OCI-LY7 (cell line): ENCODE measurements at regions of chr1 and their contacts with region 1.

Region 1: GRCh38 chr1:184051485-184052193 is at the start of gene TSEN15:
- DNase-seq: peak; percentile 94
- H3K4me3 ChIP-seq: peak within 1 kb of the TSS; percentile 73
- H3K27ac ChIP-seq: peak within 1 kb of the TSS; percentile 80
- H3K4me1 ChIP-seq: peaks cover 15% of the 10 kb centered on the region
- CTCF ChIP-seq: no peak; the same call in 1 of the 2 replicates
- total RNA-seq, gene TSEN15: 39.8 and 42.5 TPM in 2 replicates

Region 2: DNA sequence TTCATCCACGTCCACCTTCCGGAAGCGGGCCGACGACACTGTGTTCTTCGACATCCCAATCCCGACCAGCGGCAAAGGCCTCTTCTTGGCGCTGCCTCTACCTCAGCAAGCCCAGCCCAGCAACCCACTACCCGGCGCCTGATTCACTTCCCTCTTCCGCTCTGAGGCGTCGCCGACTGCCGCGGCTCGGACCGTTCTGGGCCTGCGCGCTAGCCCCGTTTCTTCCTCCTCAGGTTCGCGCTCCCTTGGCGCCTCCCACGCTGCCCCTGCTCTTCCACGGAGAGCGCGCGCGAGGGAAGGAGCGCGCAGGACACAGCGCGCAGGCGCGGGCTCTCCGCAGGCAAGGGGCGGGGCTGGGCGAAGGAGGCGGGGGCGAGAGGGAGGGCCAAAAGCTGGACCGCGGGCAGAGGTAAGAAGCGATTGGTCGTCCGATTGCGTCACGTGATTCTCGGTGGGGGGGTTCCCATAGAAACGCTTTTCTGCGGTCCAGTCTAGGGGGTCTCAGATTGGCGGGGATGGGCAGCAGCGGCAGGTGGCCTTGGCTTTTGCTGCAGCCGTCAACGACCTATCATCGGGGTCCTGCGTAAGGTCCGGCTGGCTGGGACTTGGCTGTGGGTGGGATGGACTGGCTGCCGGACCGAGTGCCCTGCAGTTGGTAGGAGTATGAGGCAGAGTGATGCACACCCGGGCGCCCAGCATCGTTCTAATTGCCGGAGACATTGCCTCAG is 415.9 kb before region 1 on chr1 and contains the start of gene ARPC5:
- CTCF ChIA-PET with region 1: no interaction called
- POLR2A ChIA-PET with region 1: interaction called, 15 read pairs
- intact Hi-C with region 1: loop called (anchors 5 kb)
- DNase-seq: peak; percentile 95
- H3K4me3 ChIP-seq: peak within 1 kb of the TSS; percentile 94
- H3K27ac ChIP-seq: peak within 1 kb of the TSS; percentile 75
- H3K4me1 ChIP-seq: peaks cover 32% of the 10 kb centered on the region
- CTCF ChIP-seq: no peak
- total RNA-seq, gene ARPC5: 116 and 148 TPM in 2 replicates

Region 3: DNA sequence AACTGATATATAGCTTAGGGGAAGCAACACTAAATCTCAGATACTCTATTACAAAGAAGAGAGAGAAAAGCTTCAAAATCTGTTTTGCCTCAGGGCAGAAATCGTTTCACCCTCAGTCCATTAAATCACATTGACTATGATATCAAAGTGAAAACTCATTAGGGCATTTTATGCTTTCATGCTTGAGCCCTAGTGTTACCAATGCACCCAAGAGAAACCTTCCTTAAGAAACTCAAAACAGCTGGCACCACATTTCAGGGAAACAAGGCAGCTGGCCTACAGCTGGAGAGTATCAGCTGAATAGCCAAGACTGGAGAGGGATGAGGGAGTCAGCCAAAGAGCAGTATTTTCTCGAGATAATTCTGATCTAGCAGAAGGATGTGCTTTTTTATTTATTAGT is 29.0 kb before region 1 on chr1:
- CTCF ChIA-PET with region 1: no interaction called
- POLR2A ChIA-PET with region 1: interaction called, 10 read pairs
- intact Hi-C with region 1: no loop called
- DNase-seq: no peak
- H3K4me3 ChIP-seq: no peak overlapping the region
- H3K27ac ChIP-seq: no peak overlapping the region
- H3K4me1 ChIP-seq: no peaks in the 10 kb centered on the region
- CTCF ChIP-seq: no peak

Region 4: DNA sequence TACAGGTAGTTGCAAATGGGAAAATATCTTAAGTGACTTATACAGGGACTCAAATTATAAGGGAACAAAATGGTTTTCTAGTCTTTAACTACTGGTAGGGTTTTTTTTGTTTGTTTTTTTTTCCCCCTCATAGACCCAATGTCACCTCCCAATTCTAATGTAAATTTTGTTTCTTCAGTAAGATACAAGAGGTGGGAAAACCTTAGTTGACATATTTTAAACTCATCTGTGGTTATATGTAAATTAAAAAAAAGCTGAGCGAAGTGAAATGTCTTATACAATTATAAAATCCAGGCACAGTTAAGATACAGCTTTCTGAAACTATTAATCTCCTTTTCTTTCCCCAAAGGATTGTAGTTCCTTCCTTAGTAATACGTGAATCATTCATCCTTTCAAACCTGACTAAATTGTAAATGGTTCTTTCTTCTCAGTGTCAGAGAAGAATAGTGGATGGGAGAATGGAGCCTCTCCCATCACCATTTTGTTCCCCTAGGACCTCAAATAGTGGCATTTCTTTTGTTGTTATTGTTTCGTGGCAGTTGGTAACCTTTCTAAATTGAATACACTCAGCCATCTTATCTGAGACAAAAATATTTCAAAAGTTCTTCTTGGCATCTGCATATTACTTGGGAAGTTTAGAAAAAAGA is 11.1 kb after region 1 on chr1:
- CTCF ChIA-PET with region 1: no interaction called
- POLR2A ChIA-PET with region 1: interaction called, 21 read pairs
- intact Hi-C with region 1: no loop called
- DNase-seq: no peak
- H3K4me3 ChIP-seq: no peak overlapping the region
- H3K27ac ChIP-seq: no peak overlapping the region
- H3K4me1 ChIP-seq: no peaks in the 10 kb centered on the region
- CTCF ChIP-seq: no peak

Region 5: DNA sequence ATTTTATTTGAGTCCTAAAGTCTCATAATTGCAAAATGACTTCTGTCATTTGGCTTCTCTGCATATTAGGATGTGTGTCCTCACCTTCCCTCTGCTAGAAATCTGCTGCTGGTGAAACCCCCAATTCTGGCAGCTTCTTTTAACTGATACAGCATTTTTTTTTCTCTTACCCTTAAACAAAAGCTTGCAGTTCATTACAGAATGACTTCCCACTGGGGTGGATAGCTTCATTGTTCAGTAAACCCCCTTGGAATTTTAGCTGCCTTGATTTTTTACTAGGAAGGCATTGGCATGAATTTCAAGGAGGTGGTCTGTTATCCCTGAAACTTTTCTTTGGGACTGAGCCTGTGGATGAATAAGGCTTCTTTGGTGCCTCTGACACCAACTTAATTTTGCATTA is 16.7 kb after region 1 on chr1:
- CTCF ChIA-PET with region 1: no interaction called
- POLR2A ChIA-PET with region 1: interaction called, 21 read pairs
- intact Hi-C with region 1: no loop called
- DNase-seq: no peak
- H3K4me3 ChIP-seq: no peak overlapping the region
- H3K27ac ChIP-seq: no peak overlapping the region
- H3K4me1 ChIP-seq: no peaks in the 10 kb centered on the region
- CTCF ChIP-seq: no peak

Region 6: GRCh38 chr1:185156854-185157598 is 1105.4 kb after region 1 on chr1 and contains the starts of genes SWT1 and TRMT1L:
- CTCF ChIA-PET with region 1: no interaction called
- POLR2A ChIA-PET with region 1: no interaction called
- intact Hi-C with region 1: loop called (anchors 10 kb)
- DNase-seq: peak; percentile 97
- H3K4me3 ChIP-seq: peak within 1 kb of the TSS; percentile 89
- H3K27ac ChIP-seq: peak within 1 kb of the TSS; percentile 64
- H3K4me1 ChIP-seq: peaks cover 21% of the 10 kb centered on the region
- CTCF ChIP-seq: no peak
- total RNA-seq, gene SWT1: 2.1 and 2.3 TPM in 2 replicates
- total RNA-seq, gene TRMT1L: 10.8 and 15.0 TPM in 2 replicates